Endothelial cell of umbilical vein (primary cell): ENCODE measurements at regions of chr10 and their contacts with region 1.

Region 1: DNA sequence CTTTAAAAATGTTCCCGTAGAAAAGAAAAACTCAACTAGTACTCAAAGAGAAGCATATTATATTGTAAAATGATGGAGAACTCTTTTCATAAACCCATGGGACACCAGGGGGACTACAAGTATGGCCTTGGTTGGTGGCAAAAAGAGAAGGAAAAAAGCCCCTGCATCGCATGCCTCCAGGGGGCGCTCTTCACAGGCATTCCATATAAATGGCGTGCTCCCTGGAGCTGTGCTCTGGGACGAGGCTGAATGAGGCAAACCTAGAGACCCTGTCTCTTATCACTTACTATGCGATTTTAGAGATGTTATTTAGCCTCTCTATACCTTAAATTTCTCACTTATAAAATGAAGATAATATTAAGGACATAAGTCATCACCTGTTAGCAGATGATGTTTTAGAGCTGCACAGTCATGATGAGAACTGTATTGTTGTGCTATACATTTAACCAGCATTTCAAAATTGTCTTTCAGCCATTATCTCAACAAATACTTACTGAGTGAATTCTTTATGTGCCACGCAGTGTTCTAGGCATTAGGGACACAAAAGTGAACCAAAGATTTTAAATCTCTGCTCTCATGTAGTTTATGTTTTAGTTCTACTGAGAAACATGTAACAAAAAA is 105.8 kb downstream of the ARHGAP21 start:
- DNase-seq: peak; percentile 59
- H3K4me3 ChIP-seq: no peak overlapping the region
- H3K27ac ChIP-seq: no peak overlapping the region
- H3K4me1 ChIP-seq: no peaks in the 10 kb centered on the region
- H3K27me3 ChIP-seq: no peaks in the 10 kb centered on the region
- CTCF ChIP-seq: peak; percentile 82 to 87
- POLR2A ChIP-seq: no peak

Region 2: DNA sequence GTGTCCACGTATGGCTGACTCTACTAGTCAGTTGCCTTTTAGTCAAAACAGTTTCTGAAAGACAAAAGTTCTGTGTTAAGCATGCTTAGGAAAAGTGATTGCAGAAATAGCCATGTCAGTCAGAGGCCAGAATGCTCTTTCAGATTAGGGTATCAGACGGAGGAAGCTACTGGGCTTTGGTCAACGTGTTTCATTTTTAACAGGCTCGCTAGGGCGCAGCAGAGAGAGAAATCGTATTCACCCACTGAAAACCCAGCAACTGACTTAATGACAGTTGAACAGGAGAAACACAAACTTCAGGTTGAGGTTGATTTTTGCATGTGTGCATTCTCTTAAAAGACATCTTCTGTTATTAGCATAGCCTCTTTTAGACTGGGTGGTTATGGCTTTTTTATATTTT is 731.5 kb before region 1 on chr10:
- CTCF ChIA-PET with region 1: no interaction called
- POLR2A ChIA-PET with region 1: no interaction called
- dilution Hi-C with region 1: no loop called
- intact Hi-C with region 1: no loop called
- DNase-seq: no peak
- H3K4me3 ChIP-seq: no peak overlapping the region
- H3K27ac ChIP-seq: no peak overlapping the region
- H3K4me1 ChIP-seq: no peaks in the 10 kb centered on the region
- H3K27me3 ChIP-seq: no peaks in the 10 kb centered on the region
- CTCF ChIP-seq: no peak
- POLR2A ChIP-seq: no peak

Region 3: DNA sequence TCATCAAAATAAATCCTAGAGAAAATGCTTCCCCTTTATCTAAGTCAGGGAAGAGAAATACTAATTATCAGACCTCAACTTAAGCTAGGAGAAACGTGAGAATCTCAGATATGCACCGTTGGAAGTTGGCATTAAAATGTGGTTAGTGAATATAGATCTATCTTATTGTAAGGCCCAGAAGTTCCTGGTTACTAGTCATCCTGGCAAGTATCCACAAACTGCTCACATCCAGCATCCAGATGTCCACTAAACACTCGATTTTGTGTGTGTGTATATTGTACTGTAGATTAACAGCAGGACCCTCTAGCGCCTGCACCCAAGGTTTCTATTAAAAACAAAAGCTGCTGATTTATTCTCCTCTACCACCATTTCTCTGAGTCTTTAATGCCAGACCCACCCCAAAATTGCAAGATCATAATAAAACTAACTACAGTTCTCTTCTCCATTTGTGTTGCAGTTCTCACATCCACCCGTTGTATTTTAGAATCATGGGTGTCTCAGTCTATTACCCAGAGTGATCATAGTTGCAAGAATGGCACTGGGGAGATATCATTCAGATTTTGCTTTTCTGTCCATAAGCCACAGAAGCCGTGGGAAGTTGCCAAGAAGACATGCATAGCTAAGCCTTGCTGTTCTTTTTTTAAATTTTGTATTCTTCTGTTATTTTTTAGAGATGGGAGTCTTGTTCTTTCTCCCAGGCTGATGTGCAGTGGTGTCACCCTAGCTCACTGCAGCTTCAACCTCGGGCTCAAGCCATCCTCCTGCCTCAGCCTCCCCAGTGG is 243.6 kb before region 1 on chr10:
- CTCF ChIA-PET with region 1: no interaction called
- POLR2A ChIA-PET with region 1: no interaction called
- dilution Hi-C with region 1: no loop called
- intact Hi-C with region 1: no loop called
- DNase-seq: no peak
- H3K4me3 ChIP-seq: no peak overlapping the region
- H3K27ac ChIP-seq: no peak overlapping the region
- H3K4me1 ChIP-seq: no peaks in the 10 kb centered on the region
- H3K27me3 ChIP-seq: no peaks in the 10 kb centered on the region
- CTCF ChIP-seq: no peak
- POLR2A ChIP-seq: no peak

Region 4: GRCh38 chr10:24603333-24603732 is 14.5 kb before region 1 on chr10:
- CTCF ChIA-PET with region 1: interaction called, 17 read pairs
- POLR2A ChIA-PET with region 1: no interaction called
- dilution Hi-C with region 1: no loop called
- intact Hi-C with region 1: no loop called
- DNase-seq: no peak
- H3K4me3 ChIP-seq: no peak overlapping the region
- H3K27ac ChIP-seq: no peak overlapping the region
- H3K4me1 ChIP-seq: no peaks in the 10 kb centered on the region
- H3K27me3 ChIP-seq: no peaks in the 10 kb centered on the region
- CTCF ChIP-seq: no peak
- POLR2A ChIP-seq: no peak

Region 5: DNA sequence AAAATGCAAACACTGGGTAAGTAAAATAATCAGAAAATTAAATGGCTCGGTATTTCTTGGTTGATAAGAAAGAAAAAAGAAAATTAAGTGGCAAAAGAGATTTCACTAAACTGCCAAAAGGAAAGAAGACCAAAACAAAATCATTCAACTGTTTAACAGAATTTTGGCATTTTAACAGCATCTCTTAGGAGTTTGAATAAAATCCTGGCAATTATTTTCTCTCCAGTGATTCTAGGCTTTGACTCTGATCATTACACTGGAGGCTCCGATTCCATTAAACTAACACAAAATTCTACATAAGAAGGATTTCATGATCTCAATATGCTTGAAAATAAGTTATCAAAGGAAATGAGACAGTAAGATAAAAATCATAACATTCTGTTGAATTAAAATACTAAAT is 43.5 kb after region 1 on chr10:
- CTCF ChIA-PET with region 1: no interaction called
- POLR2A ChIA-PET with region 1: no interaction called
- dilution Hi-C with region 1: no loop called
- intact Hi-C with region 1: no loop called
- DNase-seq: no peak
- H3K4me3 ChIP-seq: no peak overlapping the region
- H3K27ac ChIP-seq: no peak overlapping the region
- H3K4me1 ChIP-seq: no peaks in the 10 kb centered on the region
- H3K27me3 ChIP-seq: no peaks in the 10 kb centered on the region
- CTCF ChIP-seq: no peak
- POLR2A ChIP-seq: no peak

Region 6: DNA sequence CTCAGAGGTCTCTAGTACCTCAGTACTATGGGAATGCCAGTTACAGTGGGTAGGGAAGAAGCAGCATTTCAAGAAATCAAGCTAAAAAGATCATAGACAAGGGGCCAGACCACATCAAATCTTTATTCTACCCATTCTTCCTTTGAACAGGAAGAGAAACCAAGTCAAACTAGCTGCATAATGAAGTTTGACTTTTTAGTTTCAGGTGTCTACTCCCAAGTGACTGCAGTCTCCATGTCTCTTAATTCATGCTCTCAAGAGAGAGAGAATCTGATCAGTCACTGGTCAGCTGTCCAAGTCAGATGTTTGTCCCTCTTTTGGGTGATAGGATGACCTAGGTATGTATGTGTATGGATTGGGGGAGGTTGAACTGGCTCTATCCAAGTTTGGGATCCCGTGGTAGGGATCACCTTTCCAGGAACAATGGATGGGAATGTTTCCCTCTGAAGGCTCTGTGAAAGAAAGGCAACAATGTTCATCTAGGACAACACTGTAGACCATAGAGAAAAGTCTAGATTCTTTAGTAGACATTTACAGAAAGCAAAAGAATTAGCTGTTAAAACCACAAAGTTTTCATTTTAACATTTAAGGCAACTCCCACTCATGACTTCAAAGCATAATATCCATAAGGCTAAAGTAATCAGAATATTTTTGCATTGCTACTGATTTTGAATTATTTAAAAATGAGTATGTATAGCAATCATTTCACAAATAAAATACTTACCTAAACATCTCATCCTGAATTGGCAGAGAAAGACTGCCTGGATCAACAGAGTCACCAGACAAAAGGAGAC is 364.6 kb after region 1 on chr10:
- CTCF ChIA-PET with region 1: interaction called, 10 read pairs
- POLR2A ChIA-PET with region 1: no interaction called
- dilution Hi-C with region 1: no loop called
- intact Hi-C with region 1: no loop called
- DNase-seq: no peak
- H3K4me3 ChIP-seq: no peak overlapping the region
- H3K27ac ChIP-seq: no peak overlapping the region
- H3K4me1 ChIP-seq: no peaks in the 10 kb centered on the region
- H3K27me3 ChIP-seq: peaks cover 0 to 3% of the 10 kb centered on the region in 2 experiments
- CTCF ChIP-seq: no peak
- POLR2A ChIP-seq: no peak

Region 7: DNA sequence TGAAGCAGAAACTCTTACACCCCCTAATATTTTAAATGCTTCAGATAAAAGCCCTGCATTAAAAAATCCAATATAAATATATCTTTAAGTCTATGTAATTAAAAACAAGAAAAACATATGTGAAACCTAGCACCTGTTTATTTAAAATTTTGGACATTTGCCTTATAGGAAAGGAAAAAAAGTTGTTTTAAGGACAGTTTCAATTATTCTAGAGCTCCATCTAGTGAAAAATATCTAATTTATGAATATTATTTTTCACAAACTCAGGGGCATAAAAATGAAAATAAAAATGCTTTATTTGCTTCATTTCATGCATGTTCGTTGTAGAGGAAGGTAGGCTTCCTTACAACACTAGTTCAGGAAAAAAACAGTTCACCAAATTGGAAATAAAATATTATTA is 372.0 kb after region 1 on chr10:
- CTCF ChIA-PET with region 1: interaction called, 46 read pairs
- POLR2A ChIA-PET with region 1: no interaction called
- dilution Hi-C with region 1: no loop called
- intact Hi-C with region 1: loop called (anchors 1 kb)
- DNase-seq: peak; percentile 16
- H3K4me3 ChIP-seq: no peak overlapping the region
- H3K27ac ChIP-seq: no peak overlapping the region
- H3K4me1 ChIP-seq: peaks cover 5% of the 10 kb centered on the region
- H3K27me3 ChIP-seq: no peaks in the 10 kb centered on the region
- CTCF ChIP-seq: no peak
- POLR2A ChIP-seq: no peak